OCI-LY7 (cell line): ENCODE measurements at regions of chr6 and their contacts with region 1.

Region 1: DNA sequence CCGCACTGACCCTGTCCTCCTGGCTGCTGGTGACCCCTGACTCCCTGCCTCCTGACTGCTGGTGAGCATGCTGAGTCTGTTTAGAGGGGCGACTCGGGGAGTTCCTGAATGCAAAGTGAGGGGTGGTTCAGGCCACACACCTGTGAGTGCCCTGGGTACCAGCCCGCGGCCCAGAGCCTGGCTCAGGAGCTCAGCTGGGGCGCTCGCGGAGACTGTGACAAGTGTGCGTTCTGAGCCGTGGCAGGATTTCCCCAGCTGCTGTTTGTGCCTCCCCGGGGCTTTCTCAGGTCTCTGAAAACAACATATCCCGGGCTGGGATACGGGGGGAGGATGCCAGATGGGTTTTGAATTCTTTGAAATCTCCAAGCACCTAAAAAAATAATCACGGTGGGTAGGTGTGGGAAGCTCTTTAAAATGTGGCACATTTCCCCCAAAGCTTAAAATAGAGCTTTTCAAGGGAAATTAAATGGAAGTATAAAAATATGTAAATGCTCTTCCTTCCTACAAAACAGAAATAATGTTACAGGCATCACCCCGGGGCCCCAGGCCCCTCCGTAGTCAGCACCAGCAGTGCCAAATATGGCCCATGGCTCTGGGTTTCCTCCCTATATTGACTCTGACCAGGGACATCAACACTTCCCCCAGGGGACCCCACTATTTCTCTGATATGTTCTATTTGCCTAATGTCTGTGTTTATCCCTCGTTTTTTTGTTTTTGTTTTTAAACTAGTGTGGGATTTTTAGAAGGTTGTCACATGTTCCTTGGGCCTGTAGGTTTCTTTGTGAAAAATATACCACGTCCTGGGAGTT is 49.9 kb upstream of the TAGAP start:
- DNase-seq: peak; percentile 96
- H3K4me3 ChIP-seq: peak overlapping the region; percentile 56
- H3K27ac ChIP-seq: peak overlapping the region; percentile 87
- H3K4me1 ChIP-seq: peaks cover 70% of the 10 kb centered on the region
- CTCF ChIP-seq: no peak

Region 2: DNA sequence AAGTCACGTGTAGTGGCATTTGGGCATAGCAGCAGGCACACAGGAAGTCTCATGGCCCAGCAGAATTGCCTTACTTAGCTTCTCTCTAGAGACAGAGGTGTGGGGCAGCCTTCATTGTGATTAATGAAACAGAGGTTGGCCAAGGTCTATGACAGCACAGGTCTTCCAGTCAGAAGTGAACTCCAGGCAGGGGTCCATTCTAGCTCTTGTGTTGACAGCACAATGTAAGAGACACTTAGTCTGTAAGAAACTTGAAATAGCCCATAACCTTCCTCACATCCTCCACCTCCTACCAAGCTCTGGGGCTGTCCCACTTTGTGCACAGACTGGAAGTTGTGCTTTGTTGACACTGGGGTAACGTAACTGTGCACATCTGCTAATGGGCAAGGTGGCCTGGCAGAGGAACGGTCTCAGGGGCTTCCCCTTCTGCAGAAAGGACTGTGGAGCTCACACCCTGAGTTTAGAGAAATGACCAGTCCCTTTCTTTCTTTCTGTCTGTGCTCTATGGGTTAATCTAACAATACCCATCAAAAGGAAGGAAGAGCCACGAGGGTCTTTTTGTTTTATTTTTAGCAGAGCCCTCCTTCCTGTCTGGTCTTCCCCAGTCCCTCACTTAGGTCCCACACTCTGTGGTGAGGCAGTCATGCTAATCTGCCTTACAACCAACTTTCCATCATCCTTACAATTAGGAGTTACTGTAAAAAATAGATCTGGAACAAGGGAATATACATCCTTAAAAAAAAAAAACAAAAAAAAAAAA is 14.3 kb before region 1 on chr6:
- CTCF ChIA-PET with region 1: no interaction called
- POLR2A ChIA-PET with region 1: interaction called, 29 read pairs
- intact Hi-C with region 1: no loop called
- DNase-seq: peak; percentile 51
- H3K4me3 ChIP-seq: peak overlapping the region; percentile 11
- H3K27ac ChIP-seq: peak overlapping the region; percentile 5
- H3K4me1 ChIP-seq: peaks cover 24% of the 10 kb centered on the region
- CTCF ChIP-seq: no peak